Endothelial cell of umbilical vein (primary cell): ENCODE measurements at regions of chr1 and their contacts with region 1.

Region 1: DNA sequence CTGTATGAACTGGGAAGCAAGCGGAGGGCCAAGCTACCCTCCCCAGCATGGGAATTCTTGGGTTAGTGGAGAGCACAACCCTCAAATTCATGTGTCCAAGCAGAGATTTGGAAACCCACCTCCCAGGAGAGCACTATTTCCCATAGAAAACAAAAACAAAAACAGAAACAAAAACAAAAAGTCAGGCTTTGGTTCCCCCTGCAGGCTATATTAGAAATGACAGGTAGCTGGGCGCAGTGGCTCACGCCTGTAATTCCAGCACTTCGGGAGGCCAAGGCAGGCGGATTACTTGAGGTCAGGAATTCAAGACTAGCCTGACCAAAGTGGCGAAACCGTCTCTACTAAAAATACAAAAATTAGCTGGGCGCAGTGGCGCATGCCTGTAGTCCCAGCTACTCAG is 10.8 kb downstream of the MINDY1 start:
- DNase-seq: no peak
- H3K4me3 ChIP-seq: no peak overlapping the region
- H3K27ac ChIP-seq: no peak overlapping the region
- H3K4me1 ChIP-seq: peaks cover 11% of the 10 kb centered on the region
- H3K27me3 ChIP-seq: no peaks in the 10 kb centered on the region
- CTCF ChIP-seq: peak; percentile 57 to 68
- POLR2A ChIP-seq: no peak

Region 2: DNA sequence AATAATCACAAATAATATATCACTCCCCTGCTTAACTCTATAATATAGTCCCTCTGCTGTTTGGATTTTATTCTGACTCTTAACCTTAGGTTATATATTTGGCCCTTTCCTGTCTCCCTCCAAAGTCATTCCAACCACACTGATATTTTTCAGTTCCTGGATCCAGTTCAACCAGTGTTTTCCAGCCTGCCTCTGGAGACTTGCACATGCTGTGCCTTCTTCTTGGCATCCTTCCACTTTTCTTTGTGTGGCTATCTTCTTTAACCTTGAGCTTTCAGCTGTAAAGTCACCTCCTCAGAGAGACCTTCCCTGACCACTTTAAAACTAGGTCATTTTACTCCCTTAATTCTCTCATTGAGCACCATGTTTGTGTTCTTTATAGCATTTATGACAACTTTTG is 40.6 kb before region 1 on chr1:
- CTCF ChIA-PET with region 1: interaction called, 10 read pairs
- POLR2A ChIA-PET with region 1: no interaction called
- dilution Hi-C with region 1: no loop called
- intact Hi-C with region 1: no loop called
- DNase-seq: no peak
- H3K4me3 ChIP-seq: no peak overlapping the region
- H3K27ac ChIP-seq: no peak overlapping the region
- H3K4me1 ChIP-seq: no peaks in the 10 kb centered on the region
- H3K27me3 ChIP-seq: no peaks in the 10 kb centered on the region
- CTCF ChIP-seq: no peak
- POLR2A ChIP-seq: no peak

Region 3: DNA sequence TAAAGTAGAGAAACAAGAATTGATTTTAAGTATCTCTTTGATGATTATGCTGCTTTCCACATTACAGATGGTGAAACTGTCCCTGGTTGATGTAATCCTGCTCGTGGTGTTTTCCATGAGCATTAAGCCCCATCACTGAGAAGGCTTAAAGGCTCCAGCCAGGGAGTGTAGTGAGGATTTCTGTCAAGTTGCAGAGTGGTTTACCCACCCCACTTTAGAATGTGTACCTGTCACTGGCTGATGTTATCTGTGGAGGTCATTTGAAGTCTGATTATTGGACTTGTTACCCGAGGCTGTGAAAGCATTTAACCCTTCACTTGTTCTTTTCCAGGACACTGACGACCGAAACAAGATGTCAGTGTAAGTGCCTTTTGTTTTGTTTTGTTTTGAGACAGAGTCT is 34.1 kb before region 1 on chr1:
- CTCF ChIA-PET with region 1: interaction called, 11 read pairs
- POLR2A ChIA-PET with region 1: no interaction called
- dilution Hi-C with region 1: no loop called
- intact Hi-C with region 1: no loop called
- DNase-seq: no peak
- H3K4me3 ChIP-seq: no peak overlapping the region
- H3K27ac ChIP-seq: no peak overlapping the region
- H3K4me1 ChIP-seq: peaks cover 3% of the 10 kb centered on the region
- H3K27me3 ChIP-seq: no peaks in the 10 kb centered on the region
- CTCF ChIP-seq: no peak
- POLR2A ChIP-seq: no peak

Region 4: GRCh38 chr1:150970808-150971592 is 24.9 kb before region 1 on chr1:
- CTCF ChIA-PET with region 1: interaction called, 278 read pairs
- POLR2A ChIA-PET with region 1: no interaction called
- dilution Hi-C with region 1: no loop called
- intact Hi-C with region 1: no loop called
- DNase-seq: no peak
- H3K4me3 ChIP-seq: no peak overlapping the region
- H3K27ac ChIP-seq: no peak overlapping the region
- H3K4me1 ChIP-seq: peaks cover 15% of the 10 kb centered on the region
- H3K27me3 ChIP-seq: no peaks in the 10 kb centered on the region
- CTCF ChIP-seq: no peak
- POLR2A ChIP-seq: peak; percentile 8

Region 5: DNA sequence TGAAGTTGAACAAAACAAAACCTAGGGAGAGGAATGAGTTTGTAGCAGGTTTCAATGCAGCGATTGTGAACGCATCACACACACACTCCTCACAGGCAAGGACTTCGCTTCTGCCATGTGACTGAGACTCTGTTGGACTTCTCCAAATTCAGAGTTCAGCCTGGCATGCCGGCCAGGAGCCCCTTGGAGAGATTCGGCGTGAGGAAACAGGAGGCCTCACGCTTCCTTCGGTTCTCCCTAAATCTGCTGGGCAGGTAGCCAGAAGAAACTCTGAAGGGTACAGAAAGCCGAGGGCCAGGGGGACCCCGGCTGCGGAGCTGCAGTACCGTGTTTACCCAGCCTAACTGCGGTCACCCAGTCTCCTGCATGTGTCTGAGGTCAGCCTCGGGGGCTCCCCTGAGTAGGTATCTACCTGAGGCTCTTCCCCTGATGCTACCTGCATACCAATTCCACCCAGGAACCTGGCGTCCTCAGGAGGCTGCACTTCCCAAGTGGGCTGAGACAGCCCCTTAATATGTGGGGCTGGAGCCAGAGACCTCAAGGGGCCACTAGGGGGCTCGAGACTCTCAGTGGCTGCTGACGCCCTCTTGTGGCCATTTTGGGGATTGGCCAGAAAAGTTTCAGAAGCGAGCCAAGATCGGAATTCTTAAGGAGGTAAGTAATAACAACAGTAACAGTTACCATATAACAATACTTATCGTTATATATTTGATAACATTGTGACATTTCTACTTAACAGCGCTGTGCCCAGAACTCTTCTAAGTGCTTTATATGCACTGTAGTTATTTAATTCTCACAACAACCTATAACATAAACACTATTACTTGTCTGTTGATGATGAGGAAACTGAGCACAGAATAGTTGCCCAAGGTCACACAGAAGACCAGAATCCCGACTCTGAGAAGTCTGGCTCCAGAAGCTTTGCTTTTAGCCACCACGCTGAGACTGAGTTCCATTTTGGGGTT is 16.5 kb before region 1 on chr1:
- CTCF ChIA-PET with region 1: interaction called, 278 read pairs
- POLR2A ChIA-PET with region 1: interaction called, 3 read pairs
- dilution Hi-C with region 1: no loop called
- intact Hi-C with region 1: loop called (anchors 1 kb)
- DNase-seq: peak; percentile 91
- H3K4me3 ChIP-seq: no peak overlapping the region
- H3K27ac ChIP-seq: no peak overlapping the region
- H3K4me1 ChIP-seq: peaks cover 22% of the 10 kb centered on the region
- H3K27me3 ChIP-seq: no peaks in the 10 kb centered on the region
- CTCF ChIP-seq: peak; percentile 100
- POLR2A ChIP-seq: no peak

Region 6: DNA sequence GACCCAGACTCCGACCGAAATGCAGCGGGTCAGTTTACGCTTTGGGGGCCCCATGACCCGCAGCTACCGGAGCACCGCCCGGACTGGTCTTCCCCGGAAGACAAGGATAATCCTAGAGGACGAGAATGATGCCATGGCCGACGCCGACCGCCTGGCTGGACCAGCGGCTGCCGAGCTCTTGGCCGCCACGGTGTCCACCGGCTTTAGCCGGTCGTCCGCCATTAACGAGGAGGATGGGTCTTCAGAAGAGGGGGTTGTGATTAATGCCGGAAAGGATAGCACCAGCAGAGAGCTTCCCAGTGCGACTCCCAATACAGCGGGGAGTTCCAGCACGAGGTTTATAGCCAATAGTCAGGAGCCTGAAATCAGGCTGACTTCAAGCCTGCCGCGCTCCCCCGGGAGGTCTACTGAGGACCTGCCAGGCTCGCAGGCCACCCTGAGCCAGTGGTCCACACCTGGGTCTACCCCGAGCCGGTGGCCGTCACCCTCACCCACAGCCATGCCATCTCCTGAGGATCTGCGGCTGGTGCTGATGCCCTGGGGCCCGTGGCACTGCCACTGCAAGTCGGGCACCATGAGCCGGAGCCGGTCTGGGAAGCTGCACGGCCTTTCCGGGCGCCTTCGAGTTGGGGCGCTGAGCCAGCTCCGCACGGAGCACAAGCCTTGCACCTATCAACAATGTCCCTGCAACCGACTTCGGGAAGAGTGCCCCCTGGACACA is 52.2 kb after region 1 on chr1:
- CTCF ChIA-PET with region 1: interaction called, 10 read pairs
- POLR2A ChIA-PET with region 1: no interaction called
- dilution Hi-C with region 1: no loop called
- intact Hi-C with region 1: no loop called
- DNase-seq: peak; percentile 84
- H3K4me3 ChIP-seq: peak overlapping the region; percentile 66 to 76 (median 73)
- H3K27ac ChIP-seq: peak overlapping the region; percentile 26
- H3K4me1 ChIP-seq: peaks cover 8% of the 10 kb centered on the region
- H3K27me3 ChIP-seq: no peaks in the 10 kb centered on the region
- CTCF ChIP-seq: peak; percentile 40 to 74
- POLR2A ChIP-seq: peak; percentile 65

Region 7: DNA sequence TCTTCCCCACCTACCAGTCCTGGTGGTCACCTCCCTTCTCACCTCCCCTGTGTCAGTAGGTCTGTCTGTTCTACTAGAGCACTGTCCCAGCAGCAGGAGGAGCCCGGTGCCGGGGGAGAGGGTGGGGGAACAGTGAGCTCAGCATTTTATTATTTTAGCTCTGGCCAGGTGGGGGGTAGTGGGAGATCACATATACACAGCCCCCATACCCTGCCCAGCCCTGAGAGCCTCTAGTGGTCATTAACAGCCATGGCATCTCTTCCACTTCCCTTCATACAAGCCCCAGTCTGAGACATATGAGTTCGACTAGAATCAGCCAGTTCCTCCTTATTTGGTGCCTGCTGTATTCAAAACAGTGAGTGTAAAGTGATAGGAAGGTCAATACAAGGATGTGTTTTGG is 180.0 kb after region 1 on chr1 and contains the start of gene TMOD4:
- CTCF ChIA-PET with region 1: no interaction called
- POLR2A ChIA-PET with region 1: no interaction called
- dilution Hi-C with region 1: no loop called
- intact Hi-C with region 1: no loop called
- DNase-seq: peak; percentile 19
- H3K4me3 ChIP-seq: no peak within 1 kb of the TSS
- H3K27ac ChIP-seq: no peak within 1 kb of the TSS
- H3K4me1 ChIP-seq: no peaks in the 10 kb centered on the region
- H3K27me3 ChIP-seq: no peaks in the 10 kb centered on the region
- CTCF ChIP-seq: peak; percentile 47 to 61
- POLR2A ChIP-seq: no peak
- total RNA-seq, gene TMOD4: 1.4 TPM in 2 replicates

Region 8: GRCh38 chr1:151227634-151228033 is 231.7 kb after region 1 on chr1:
- CTCF ChIA-PET with region 1: no interaction called
- POLR2A ChIA-PET with region 1: no interaction called
- dilution Hi-C with region 1: no loop called
- intact Hi-C with region 1: no loop called
- DNase-seq: no peak
- H3K4me3 ChIP-seq: no peak overlapping the region
- H3K27ac ChIP-seq: no peak overlapping the region
- H3K4me1 ChIP-seq: no peaks in the 10 kb centered on the region
- H3K27me3 ChIP-seq: no peaks in the 10 kb centered on the region
- CTCF ChIP-seq: no peak
- POLR2A ChIP-seq: no peak